Motor neuron (in vitro differentiated cells): ENCODE measurements at regions of chr3 and their contacts with region 1.

Region 1: DNA sequence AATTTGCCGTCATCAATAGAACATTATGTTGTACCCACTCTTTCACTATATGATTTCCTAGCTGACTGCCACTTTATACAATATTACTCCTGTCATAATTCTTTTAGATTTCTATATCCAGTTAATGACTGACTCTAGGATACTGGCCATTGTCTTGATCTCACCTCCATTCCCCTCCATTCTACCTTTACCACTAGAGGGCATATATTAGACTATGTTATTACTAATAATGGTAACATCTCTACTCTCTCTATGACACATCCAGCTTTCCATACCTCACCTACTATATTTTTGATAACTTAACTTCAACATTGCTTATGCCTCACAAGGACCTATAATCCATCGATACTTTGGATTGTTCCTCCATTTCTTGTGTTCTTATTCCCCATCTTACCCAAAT is 31.4 kb upstream of the POU1F1 start:
- ATAC-seq: no peak
- H3K4me3 ChIP-seq: no peak overlapping the region
- H3K27ac ChIP-seq: no peak overlapping the region
- H3K4me1 ChIP-seq: no peaks in the 10 kb centered on the region

Region 2: DNA sequence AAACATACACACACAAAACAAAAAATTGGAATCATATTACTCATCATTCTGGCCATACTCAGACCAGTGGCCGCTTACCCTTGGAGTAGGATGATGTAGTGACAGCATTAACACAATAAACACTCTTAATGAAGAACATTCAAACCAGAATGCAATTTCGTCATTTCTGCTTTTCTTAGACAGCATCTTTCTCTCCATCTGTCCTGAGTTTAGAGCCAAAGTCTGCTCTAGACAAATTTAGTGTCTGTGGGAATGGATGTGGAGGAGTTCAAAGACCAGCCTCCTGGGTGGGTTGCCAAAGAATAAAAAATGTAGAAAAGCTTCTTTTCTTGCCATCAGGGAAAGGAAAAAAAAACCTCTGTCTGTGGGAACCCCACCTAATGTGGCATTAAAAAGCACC is 181.0 kb after region 1 on chr3:
- in situ Hi-C with region 1: loop called in 1 of 9 experiments (anchors 25 kb)
- ATAC-seq: peak in 2 of 8 experiments; percentile 82 to 88
- H3K4me3 ChIP-seq: no peak overlapping the region
- H3K27ac ChIP-seq: no peak overlapping the region
- H3K4me1 ChIP-seq: no peaks in the 10 kb centered on the region

Region 3: DNA sequence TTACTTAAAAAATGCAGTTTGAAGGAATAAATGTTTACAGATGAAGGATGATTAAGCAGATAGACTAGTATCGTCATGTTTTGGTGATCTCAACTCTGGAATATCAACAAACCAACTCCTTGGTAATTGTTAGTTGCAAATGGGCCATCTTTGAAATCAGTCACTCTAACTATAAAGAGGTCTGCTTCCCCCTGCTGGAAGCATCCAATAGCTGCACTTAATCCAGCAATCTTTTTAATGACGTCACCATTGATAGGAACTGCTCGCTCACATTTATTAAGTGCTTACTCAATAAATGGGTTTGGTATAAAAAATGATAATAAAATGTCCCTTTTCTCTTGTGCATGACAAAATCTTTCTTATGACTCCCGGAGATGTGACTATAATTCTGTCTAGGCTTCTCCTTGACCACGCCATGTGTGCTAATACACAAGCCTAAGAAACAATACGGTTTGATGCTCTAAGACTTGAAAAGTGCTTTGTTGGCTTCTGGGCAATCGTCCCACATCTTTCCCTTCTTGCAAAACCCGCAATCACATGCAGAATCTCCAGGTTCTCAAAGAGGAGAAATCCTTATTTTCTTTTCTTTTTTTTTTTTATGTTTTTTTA is 196.2 kb after region 1 on chr3:
- in situ Hi-C with region 1: loop called in 2 of 9 experiments (anchors 25 kb)
- ATAC-seq: peak in 4 of 8 experiments; percentile 64 to 81 (median 70)
- H3K4me3 ChIP-seq: no peak overlapping the region
- H3K27ac ChIP-seq: no peak overlapping the region
- H3K4me1 ChIP-seq: no peaks in the 10 kb centered on the region

Region 4: DNA sequence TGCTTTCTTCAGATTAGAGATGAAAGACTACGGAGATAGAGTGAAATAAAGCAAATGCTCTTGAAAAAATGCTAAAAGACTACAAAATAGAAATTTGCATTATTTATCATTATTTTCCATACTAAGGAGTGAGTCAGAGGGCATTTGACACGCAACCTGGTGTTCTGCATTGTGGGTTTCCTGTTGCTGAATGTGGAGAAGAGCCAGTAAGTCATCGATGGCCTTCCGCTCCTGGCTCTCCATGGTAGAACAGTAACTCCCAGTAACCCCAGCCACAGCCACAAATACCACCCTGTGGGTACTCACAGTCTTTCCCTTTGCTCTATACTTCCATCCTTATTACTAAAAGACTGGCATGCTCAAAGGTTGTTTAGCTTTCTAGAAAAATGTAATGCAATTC is 689.5 kb after region 1 on chr3:
- in situ Hi-C with region 1: loop called in 2 of 9 experiments (anchors 25 kb)
- ATAC-seq: peak in 3 of 8 experiments; percentile 33 to 98 (median 96)
- H3K4me3 ChIP-seq: no peak overlapping the region
- H3K27ac ChIP-seq: no peak overlapping the region
- H3K4me1 ChIP-seq: no peaks in the 10 kb centered on the region

Region 5: GRCh38 chr3:88003115-88003755 is 695.4 kb after region 1 on chr3:
- in situ Hi-C with region 1: loop called in 2 of 9 experiments (anchors 25 kb)
- ATAC-seq: peak in 3 of 8 experiments; percentile 29
- H3K4me3 ChIP-seq: no peak overlapping the region
- H3K27ac ChIP-seq: no peak overlapping the region
- H3K4me1 ChIP-seq: no peaks in the 10 kb centered on the region